ENCODE measurements at regions of chr6 and their contacts with region 1.

Region 1: GRCh38 chr6:16183187-16183664 is 54.3 kb downstream of the MYLIP start:
- DNase-seq: no peak
- H3K4me3 Mint-ChIP-seq: no peak overlapping the region
- H3K27ac Mint-ChIP-seq: peak overlapping the region; percentile 37
- H3K4me1 Mint-ChIP-seq: peaks cover 28% of the 10 kb centered on the region
- H3K27me3 Mint-ChIP-seq: peaks cover 11% of the 10 kb centered on the region

Region 2: DNA sequence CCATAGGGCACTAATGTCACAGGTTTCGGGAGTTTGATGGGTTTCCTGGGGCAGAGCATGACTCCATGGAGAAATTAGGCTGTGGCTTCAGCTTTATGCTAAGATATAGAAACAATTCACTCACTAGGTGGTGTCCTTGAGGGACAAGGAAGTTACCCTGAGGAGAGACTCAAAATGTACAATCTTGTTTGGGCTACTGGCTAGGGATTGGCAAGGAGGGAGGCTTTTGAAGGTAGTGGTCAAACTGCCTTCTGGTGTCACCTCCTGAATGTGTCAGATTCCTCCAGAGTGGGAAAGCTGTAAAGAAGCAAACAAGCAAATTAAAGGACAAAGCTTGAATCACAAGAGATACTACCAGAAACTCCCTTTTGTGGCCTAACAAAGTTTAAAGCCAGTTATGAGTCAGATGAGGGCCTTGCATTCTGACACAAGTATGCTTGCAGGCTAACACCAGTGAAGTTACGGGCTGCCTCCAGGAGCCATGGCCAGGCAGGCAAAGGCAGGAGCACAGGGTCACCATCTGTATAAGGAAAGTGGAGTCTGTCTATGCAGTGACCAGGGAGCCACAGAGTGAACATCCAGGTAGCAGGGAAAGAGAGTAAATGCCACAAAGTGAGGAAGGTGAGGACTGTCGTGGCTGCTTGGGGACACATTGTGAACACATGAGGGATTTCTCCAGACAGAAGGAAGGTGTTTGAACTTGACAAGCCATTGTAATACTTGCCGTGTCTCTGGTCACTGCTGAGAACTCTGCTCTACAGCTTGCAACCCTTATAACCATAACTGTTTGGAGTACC is 412.7 kb before region 1 on chr6:
- intact Hi-C with region 1: loop called (anchors 2 kb)
- DNase-seq: peak; percentile 12
- H3K4me3 Mint-ChIP-seq: peak overlapping the region; percentile 65
- H3K27ac Mint-ChIP-seq: peak overlapping the region; percentile 98
- H3K4me1 Mint-ChIP-seq: peaks cover 59% of the 10 kb centered on the region
- H3K27me3 Mint-ChIP-seq: no peaks in the 10 kb centered on the region

Region 3: DNA sequence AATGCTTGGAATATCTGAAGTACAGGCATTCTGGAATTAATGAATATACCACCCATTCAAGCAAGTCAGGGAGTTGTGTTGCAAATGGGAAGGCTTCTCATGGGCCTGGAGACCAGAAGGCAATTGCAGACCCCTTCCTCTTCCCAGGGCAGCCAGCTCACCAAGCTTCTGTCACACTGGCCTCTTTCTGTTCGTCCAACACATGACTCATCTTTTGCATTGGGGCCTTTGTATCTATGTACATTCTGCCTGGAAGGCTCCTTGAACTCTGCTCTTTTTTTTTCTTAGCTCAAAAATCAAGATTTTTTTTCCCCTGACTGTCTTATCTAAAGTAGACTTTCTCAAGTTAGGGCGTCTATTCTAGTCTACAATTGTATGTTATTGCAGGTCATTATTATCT is 187.2 kb before region 1 on chr6:
- intact Hi-C with region 1: loop called (anchors 5 kb)
- DNase-seq: no peak
- H3K4me3 Mint-ChIP-seq: no peak overlapping the region
- H3K27ac Mint-ChIP-seq: peak overlapping the region; percentile 55
- H3K4me1 Mint-ChIP-seq: peaks cover 24% of the 10 kb centered on the region
- H3K27me3 Mint-ChIP-seq: no peaks in the 10 kb centered on the region

Region 4: DNA sequence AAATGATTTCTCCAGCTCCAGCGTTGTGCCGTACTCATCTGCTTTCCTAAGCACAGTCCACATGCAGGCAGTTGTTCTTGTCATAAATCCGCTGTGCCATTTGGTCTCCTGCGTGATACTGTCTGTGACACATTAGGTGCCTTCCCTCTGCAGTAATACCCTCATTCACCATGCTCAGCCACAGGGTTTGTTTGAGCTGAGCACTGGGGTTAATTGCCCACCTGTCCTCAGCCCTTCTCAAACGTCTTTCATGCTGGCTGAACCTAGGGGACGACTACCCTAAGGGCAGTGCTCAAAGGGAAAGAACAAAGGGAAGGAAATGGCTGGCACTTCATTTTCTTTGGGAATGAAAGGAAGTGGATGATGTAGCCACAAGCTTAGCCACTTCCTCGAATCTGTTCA is 118.6 kb before region 1 on chr6:
- intact Hi-C with region 1: no loop called
- DNase-seq: no peak
- H3K4me3 Mint-ChIP-seq: no peak overlapping the region
- H3K27ac Mint-ChIP-seq: no peak overlapping the region
- H3K4me1 Mint-ChIP-seq: peaks cover 2% of the 10 kb centered on the region
- H3K27me3 Mint-ChIP-seq: peaks cover 2% of the 10 kb centered on the region

Measured in activated T-helper 2 cell treated with anti-CD3 and anti-CD28 coated beads, Interferon-gamma antibody, Interleukin-2, Interleukin-4, amounts not matched to agents 10 μg/mL and 5 μg/mL and 100 μg/mL, durations not matched to agents 14 hours and 24 hours and 36 hours (primary cell).